ENCODE measurements at regions of chr18 and their contacts with region 1.

Region 1: DNA sequence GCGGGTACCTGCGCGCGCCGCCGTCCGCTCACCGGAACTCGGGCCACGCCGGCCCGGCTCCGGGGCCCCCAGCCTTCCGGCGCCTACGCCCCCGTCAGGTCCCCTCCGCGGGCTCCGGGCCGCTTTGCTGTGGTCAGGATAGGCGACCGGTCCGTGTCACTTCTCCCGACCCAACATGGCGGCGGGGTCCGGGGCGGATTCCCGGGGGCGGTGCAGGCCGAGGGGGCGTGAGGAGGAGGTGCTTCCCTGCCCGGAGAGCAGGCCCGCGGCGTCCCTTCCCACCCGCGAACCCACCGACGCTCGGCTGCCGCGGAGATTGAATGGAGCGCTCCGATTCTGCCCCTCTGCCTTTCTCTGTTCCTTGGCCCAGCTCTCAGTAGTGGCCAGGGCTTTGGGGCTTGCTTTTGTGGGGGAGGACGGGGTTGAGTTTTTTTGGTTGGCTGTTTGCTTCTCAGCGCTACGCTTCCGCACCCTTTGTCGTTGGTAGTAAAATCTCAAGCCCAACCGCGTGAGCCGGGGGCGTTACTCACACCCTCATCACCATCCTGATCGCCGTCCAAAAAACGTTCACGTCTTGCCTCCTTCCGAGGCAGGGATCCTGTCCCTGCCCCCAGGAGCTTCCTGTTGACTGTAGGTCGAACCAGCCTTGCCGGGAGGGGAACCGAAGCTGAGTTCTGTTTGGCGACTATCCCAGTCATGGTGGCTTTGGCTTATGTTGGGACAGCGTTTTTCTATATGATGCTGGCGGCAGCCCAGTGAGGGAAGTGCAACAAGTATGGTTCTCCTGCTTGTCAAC is 532 bp upstream of the YES1 start:
- DNase-seq: peak; percentile 82
- H3K4me3 Mint-ChIP-seq: peak overlapping the region; percentile 80
- H3K27ac Mint-ChIP-seq: peak overlapping the region; percentile 98
- H3K4me1 Mint-ChIP-seq: peaks cover 69% of the 10 kb centered on the region
- H3K27me3 Mint-ChIP-seq: no peaks in the 10 kb centered on the region

Region 2: GRCh38 chr18:712401-713134 is 100.0 kb before region 1 on chr18 and contains the start of gene ENOSF1:
- CTCF ChIA-PET with region 1: interaction called, 10 read pairs
- POLR2A ChIA-PET with region 1: no interaction called
- DNase-seq: peak; percentile 83
- H3K4me3 Mint-ChIP-seq: peak within 1 kb of the TSS; percentile 80
- H3K27ac Mint-ChIP-seq: peak within 1 kb of the TSS; percentile 95
- H3K4me1 Mint-ChIP-seq: peaks cover 40% of the 10 kb centered on the region
- H3K27me3 Mint-ChIP-seq: no peaks in the 10 kb centered on the region
- total RNA-seq, gene ENOSF1: 67.2 to 70.3 TPM

Region 3: DNA sequence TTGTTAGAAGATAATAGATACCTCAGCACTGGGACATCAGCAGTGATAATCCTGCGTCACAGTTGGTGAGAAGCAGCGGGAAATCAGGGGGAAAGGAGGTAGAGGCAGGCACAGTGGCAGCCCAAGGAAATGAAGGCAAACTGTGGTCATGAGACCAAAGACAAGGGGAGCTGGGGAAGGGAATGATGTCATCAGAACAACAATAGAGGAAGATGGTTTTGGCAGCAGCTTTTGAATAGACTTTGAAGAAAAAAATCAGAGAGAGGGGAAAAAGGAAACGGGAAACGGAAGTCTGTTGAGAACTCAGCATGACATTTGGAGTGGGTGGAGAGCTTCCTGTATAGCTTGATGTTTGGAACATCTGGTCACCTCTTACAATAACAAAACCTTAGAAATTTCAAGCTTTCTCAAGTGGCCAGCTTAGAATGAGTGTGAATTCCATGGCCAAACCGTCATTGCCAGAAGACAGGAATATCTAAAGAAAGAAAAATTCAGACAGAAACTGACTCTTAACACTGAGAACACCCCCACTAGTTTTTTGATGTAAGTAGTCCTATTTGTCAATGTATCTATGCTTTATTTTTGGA is 17.8 kb after region 1 on chr18:
- CTCF ChIA-PET with region 1: interaction called, 15 read pairs
- POLR2A ChIA-PET with region 1: no interaction called
- DNase-seq: peak; percentile 48
- H3K4me3 Mint-ChIP-seq: peak overlapping the region; percentile 45
- H3K27ac Mint-ChIP-seq: peak overlapping the region; percentile 75
- H3K4me1 Mint-ChIP-seq: peaks cover 24% of the 10 kb centered on the region
- H3K27me3 Mint-ChIP-seq: peaks cover 6% of the 10 kb centered on the region

Region 4: DNA sequence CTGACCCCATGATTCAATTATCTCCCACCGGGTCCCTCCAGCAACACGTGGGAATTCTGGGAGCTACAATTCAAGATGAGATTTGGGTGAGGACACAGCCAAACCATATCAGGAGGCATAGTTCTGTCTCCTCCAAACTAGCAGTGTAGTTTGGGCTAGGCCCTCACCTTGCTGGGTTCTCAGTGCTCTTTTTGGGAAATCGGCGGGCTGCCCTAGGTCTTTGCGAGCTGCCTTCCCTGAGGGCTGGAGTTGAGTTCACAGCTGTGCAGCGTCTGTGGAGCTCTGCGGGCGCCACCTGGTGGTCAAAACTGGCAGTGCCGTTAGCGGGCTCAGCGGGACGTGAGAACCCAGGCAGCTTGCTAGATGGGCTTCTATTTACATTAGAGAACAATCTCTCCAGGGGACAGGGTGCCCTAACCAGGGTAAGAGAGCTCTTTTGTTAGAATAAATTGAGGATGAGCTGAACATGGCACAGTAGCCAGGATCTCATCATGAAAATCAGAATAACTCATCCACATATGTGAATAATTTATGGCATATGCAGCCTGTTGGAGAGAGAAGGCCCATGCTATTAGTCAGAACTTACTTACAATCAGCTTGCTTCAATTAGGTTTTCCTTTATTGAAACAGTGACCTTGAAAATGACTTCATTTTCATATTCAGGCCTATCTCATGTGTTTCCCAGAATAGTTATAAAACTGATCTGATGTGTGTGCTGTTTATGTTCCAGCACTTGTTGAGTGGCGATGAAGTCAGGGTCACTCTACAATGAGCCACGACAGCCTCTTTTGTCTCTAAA is 26.8 kb after region 1 on chr18:
- CTCF ChIA-PET with region 1: interaction called, 18 read pairs
- POLR2A ChIA-PET with region 1: no interaction called
- DNase-seq: peak; percentile 88
- H3K4me3 Mint-ChIP-seq: no peak overlapping the region
- H3K27ac Mint-ChIP-seq: no peak overlapping the region
- H3K4me1 Mint-ChIP-seq: peaks cover 7% of the 10 kb centered on the region
- H3K27me3 Mint-ChIP-seq: peaks cover 11% of the 10 kb centered on the region

Region 5: DNA sequence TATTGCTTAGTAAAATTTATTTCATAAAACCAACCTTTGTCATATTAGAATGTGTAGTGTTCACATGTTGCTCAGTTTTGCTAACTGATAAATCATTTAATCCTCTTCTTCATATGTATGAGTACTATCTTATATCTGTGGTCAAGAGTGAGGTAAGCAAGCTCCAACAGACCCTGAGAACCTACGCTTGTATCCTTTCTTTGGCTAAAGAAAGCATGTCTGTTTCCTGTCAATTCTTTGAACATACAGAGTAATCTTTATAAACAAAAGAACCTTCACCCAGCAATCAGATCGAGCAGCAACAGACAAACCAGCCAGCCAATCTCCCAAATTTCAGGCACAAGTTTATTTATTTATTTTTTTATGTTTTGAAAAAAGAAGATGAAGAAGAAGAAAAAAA is 98.5 kb after region 1 on chr18:
- CTCF ChIA-PET with region 1: no interaction called
- POLR2A ChIA-PET with region 1: no interaction called
- DNase-seq: no peak
- H3K4me3 Mint-ChIP-seq: no peak overlapping the region
- H3K27ac Mint-ChIP-seq: no peak overlapping the region
- H3K4me1 Mint-ChIP-seq: peaks cover 13% of the 10 kb centered on the region
- H3K27me3 Mint-ChIP-seq: peaks cover 71% of the 10 kb centered on the region